ENCODE measurements at regions of chr9 and their contacts with region 1.

Region 1: GRCh38 chr9:27333241-27334052 is 36.5 kb upstream of the EQTN start:
- H3K4me3 ChIP-seq: no peak overlapping the region
- H3K27ac ChIP-seq: no peak overlapping the region
- H3K4me1 ChIP-seq: no peaks in the 10 kb centered on the region
- CTCF ChIP-seq: peak; percentile 51; the same call in 1 of the 2 replicates

Region 2: GRCh38 chr9:27227192-27227591 is 106.3 kb before region 1 on chr9:
- CTCF ChIA-PET with region 1: no interaction called
- POLR2A ChIA-PET with region 1: no interaction called
- H3K4me3 ChIP-seq: no peak overlapping the region
- H3K27ac ChIP-seq: no peak overlapping the region
- H3K4me1 ChIP-seq: no peaks in the 10 kb centered on the region
- CTCF ChIP-seq: no peak

Region 3: DNA sequence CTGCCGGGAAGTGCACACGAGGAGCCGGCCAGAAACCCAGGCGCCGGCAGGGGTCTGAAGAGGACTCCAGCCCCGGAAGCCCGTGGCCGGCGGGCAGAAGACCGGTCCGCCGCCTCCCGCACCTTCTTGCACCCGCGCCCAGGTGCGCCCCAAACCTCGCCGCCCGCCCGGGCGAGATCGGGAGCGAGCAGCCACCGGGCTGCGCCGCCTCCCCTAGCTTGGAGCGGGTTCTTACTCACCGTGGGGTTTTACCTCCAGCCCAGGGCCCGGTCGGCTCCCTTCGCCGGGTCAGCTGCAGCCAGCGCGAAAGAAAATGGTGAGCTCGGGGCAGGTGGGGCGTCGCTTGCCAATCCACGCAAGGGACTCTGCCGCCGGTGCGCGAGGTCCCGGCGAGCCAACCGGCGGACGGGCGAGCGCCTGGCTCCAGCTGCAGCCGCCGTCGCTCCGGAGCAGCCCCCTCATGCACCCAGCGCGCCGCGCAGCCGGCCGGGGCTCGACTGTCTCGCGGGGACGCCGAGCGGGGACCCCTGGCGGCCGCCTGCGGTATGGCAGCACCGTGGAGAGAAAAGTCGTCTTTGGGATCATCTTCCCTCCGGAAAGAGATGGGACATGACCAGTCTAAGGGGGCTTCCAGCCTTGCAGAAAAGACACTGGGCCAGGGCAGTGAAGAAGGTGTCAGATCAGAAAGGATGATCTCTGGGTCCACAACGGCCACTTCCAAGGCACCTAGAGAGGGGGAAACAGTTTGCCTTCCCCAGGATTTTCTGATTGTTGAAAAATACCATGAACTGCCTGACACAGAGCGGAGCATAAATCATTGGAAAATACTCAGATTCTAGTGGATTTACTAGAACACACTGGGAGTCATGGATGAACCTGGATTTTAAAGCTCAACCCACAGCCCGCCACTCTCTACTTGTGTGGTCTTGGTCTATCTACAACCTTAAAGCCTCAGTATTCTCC is 196.2 kb after region 1 on chr9 and contains the start of gene MOB3B:
- CTCF ChIA-PET with region 1: interaction called, 52 read pairs
- POLR2A ChIA-PET with region 1: interaction called, 4 read pairs
- H3K4me3 ChIP-seq: peak within 1 kb of the TSS; percentile 75
- H3K27ac ChIP-seq: peak within 1 kb of the TSS; percentile 85
- H3K4me1 ChIP-seq: no peaks in the 10 kb centered on the region
- CTCF ChIP-seq: peak; percentile 48

Region 4: DNA sequence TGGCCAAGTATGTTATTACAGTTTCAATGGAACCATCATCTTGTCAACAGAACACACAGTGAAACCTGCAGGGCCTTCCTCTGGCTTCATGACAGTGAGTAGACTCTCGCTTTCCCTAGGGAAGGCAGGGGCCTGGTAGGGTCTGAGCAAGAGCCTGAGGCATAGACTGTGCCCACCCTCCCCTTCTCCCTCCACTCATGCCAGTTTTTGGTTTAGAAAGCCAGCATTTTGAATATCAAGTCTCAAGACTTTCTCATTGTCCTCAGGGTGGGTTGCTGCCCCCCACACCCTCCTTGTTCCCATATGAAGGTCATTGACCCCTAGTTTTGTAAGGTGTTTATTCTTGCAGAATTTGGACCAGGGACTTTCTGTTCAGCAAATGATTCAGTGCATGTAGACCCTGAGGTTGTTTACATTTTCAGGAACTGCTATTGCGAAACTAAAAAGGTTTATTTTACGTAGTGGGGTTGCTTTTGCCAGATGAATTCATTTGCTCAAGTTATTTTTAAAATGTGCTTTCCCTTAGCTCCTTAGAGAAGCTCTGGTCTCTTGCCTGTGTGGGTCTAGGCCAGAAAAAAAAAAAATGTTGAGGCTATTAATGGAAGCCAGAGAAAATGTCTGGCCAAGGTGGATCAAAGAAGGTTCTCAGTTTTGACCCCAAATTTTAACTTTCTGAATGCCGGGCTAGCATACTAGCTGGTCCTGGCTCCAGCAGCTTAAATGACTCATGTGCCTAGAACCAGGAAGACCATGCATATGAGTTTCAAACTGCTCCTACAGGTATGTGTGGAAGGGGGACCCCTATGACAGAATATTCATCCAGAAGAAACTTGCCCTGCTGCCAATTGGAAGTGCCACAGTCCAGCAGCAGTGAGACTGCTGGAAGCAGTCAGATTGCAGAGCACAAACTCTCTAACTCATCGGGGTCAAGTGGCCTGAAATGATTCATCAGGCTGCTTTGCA is 206.3 kb after region 1 on chr9:
- CTCF ChIA-PET with region 1: interaction called, 78 read pairs
- POLR2A ChIA-PET with region 1: no interaction called
- H3K4me3 ChIP-seq: no peak overlapping the region
- H3K27ac ChIP-seq: no peak overlapping the region
- H3K4me1 ChIP-seq: peaks cover 11% of the 10 kb centered on the region; the same call in 1 of the 2 replicates
- CTCF ChIP-seq: no peak

Region 5: GRCh38 chr9:27548055-27548741 is 214.8 kb after region 1 on chr9:
- CTCF ChIA-PET with region 1: interaction called, 78 read pairs
- POLR2A ChIA-PET with region 1: no interaction called
- H3K4me3 ChIP-seq: no peak overlapping the region
- H3K27ac ChIP-seq: no peak overlapping the region
- H3K4me1 ChIP-seq: no peaks in the 10 kb centered on the region
- CTCF ChIP-seq: 0 out of 2 replicates have a peak, but pooled peaks have one; percentile 29